SK-N-SH (cell line): ENCODE measurements at regions of chr6 and their contacts with region 1.

Region 1: DNA sequence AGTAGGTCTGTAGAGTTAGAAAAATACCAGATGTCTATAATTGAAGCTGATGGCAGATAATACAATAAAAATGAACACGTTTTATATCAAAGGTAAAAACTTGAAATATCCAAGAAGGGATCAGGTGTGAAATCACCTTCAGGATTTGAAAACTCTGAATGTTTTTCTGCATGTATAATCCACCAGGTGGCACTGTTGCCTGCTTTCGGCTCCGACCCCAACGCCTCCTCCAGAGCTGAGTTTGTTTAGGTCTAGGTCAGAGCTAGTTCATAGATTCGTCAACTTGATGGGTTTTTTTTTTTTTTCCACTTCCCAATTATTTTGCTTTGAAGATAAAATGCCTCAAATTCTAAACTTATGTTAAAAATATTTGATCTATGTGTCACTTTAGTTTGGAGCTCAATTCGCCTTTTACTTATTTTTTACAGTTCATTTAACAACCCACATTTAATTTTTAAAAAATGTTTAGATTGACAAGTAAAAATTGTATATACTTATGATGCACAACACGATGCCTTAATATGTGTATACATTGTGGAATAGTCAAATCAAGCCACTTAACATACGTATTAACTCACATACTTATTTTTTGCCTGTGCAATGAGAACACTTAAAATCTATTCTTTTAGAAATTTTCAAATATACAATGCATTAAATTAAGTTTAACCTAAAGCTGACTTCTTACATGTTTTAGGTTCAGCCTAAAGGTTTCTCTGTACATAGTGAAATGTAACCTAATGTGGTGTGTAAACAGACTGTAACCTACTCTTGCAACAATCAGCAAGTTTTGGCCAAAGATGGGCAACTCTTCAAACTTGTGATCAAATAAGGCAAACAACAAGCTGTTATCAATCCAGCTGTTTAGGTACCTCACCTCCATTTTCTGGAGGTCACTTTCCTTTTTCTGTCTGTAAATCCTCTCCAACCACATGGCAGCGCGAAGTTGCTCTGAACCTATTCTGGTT is 39.4 kb upstream of the ENPP4 start:
- DNase-seq: peak; percentile 44
- H3K4me3 ChIP-seq: peak overlapping the region in 1 of 2 experiments; percentile 52; a peak in 1 of 4 replicates
- H3K27ac ChIP-seq: no peak overlapping the region
- H3K4me1 ChIP-seq: no peaks in the 10 kb centered on the region
- H3K27me3 ChIP-seq: no peaks in the 10 kb centered on the region
- CTCF ChIP-seq: peak; percentile 86
- EP300 ChIP-seq: no peak
- RAD21 ChIP-seq: peak; percentile 68

Region 2: GRCh38 chr6:46078294-46078693 is 12.1 kb before region 1 on chr6:
- CTCF ChIA-PET with region 1: interaction called, 27 read pairs
- POLR2A ChIA-PET with region 1: no interaction called
- DNase-seq: no peak
- H3K4me3 ChIP-seq: no peak overlapping the region
- H3K27ac ChIP-seq: no peak overlapping the region
- H3K4me1 ChIP-seq: no peaks in the 10 kb centered on the region
- H3K27me3 ChIP-seq: peaks cover 22% of the 10 kb centered on the region; the same call in 1 of the 2 replicates
- CTCF ChIP-seq: no peak
- EP300 ChIP-seq: no peak
- RAD21 ChIP-seq: no peak

Region 3: GRCh38 chr6:46103440-46104115 is 13.2 kb after region 1 on chr6:
- CTCF ChIA-PET with region 1: interaction called, 15 read pairs
- POLR2A ChIA-PET with region 1: no interaction called
- DNase-seq: no peak
- H3K4me3 ChIP-seq: no peak overlapping the region
- H3K27ac ChIP-seq: no peak overlapping the region
- H3K4me1 ChIP-seq: no peaks in the 10 kb centered on the region
- H3K27me3 ChIP-seq: no peaks in the 10 kb centered on the region
- CTCF ChIP-seq: no peak
- EP300 ChIP-seq: no peak
- RAD21 ChIP-seq: no peak

Region 4: DNA sequence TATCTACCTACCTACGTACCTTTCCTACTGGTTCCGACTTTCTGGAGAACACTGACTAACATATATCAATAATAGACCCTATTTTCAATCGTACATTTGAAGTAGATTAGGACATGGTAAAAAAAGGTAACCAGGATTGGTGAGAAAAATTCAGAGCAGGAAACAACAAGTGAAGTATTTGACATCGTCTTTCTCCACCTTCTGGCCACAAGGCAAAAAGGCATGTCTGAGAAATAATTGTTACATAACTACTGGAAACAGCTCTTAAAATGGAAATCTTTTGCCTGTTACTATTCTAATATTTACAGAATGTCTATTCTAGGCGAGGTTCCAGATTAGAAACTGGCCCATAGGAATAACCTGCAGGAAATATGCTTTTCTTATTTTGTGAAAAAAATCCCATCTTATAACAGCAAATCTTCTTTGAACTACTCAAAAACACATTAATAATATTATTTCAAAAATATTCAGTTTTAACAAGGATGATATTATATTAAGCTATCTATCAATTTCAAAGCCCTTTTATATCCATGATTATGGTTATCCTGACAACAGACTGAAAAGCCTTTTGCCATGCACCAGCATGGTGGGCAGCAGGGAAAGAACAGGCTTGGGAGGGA is 320.0 kb after region 1 on chr6:
- CTCF ChIA-PET with region 1: interaction called, 25 read pairs
- POLR2A ChIA-PET with region 1: no interaction called
- DNase-seq: peak; percentile 34
- H3K4me3 ChIP-seq: no peak overlapping the region
- H3K27ac ChIP-seq: no peak overlapping the region
- H3K4me1 ChIP-seq: no peaks in the 10 kb centered on the region
- H3K27me3 ChIP-seq: peaks cover 18% of the 10 kb centered on the region; the same call in 1 of the 2 replicates
- CTCF ChIP-seq: peak; percentile 86
- EP300 ChIP-seq: no peak
- RAD21 ChIP-seq: peak; percentile 81